ENCODE measurements at regions of chr10 and their contacts with region 1.

Region 1: GRCh38 chr10:56622335-56622973 is 261.4 kb upstream of the ZWINT start:
- DNase-seq: no peak
- ATAC-seq: peak; percentile 92
- H3K4me3 ChIP-seq: no peak overlapping the region
- H3K27ac ChIP-seq: peak overlapping the region; percentile 36; the same call in 1 of the 2 replicates
- H3K4me1 ChIP-seq: peaks cover 10% of the 10 kb centered on the region; the same call in 1 of the 2 replicates
- H3K27me3 ChIP-seq: no peaks in the 10 kb centered on the region
- CTCF ChIP-seq: no peak
- EP300 ChIP-seq: peak in 1 of 2 experiments; percentile 53; a peak in 1 of 4 replicates
- POLR2A ChIP-seq: no peak
- RAD21 ChIP-seq: no peak

Region 2: GRCh38 chr10:56481521-56482091 is 140.8 kb before region 1 on chr10:
- CTCF ChIA-PET with region 1: no interaction called
- POLR2A ChIA-PET with region 1: no interaction called
- RAD21 ChIA-PET with region 1: no interaction called
- SMC1A ChIA-PET with region 1: no interaction called
- in situ Hi-C with region 1: no loop called
- intact Hi-C with region 1: loop called (anchors 5 kb)
- DNase-seq: no peak
- ATAC-seq: peak; percentile 76
- H3K4me3 ChIP-seq: no peak overlapping the region
- H3K27ac ChIP-seq: no peak overlapping the region
- H3K4me1 ChIP-seq: no peaks in the 10 kb centered on the region
- H3K27me3 ChIP-seq: no peaks in the 10 kb centered on the region
- CTCF ChIP-seq: no peak
- EP300 ChIP-seq: no peak
- POLR2A ChIP-seq: no peak
- RAD21 ChIP-seq: no peak

Region 3: DNA sequence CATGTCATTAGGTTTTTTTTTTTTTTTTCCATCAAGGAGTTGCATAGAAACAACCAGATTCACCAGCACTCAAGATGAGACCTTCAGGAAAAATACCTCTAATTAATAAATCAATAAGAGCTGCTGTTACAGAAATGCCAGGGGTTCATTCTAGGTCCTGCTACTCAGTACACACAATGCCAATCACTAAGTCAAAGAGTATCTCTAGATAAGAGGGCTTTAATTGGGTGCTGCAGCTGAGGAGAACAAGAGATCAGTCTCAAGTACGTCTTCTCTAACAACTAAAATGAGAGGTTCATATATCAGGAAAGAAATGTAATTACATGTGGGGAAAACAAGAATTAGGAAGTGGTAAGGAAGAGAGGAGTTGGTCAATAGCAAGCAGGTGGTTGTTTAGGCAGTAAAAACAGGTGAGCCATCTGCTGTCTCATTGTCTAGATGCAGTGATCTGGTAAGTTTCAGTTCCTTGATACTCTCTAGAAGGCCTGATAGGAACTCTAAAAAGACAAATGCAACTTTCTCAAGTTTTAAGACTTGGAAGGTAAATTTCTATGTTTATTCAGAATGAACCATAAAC is 11.5 kb after region 1 on chr10:
- CTCF ChIA-PET with region 1: interaction called, 5 read pairs
- POLR2A ChIA-PET with region 1: no interaction called
- RAD21 ChIA-PET with region 1: interaction called, 3 read pairs
- SMC1A ChIA-PET with region 1: interaction called, 10 read pairs
- in situ Hi-C with region 1: no loop called
- intact Hi-C with region 1: no loop called
- DNase-seq: peak; percentile 59
- ATAC-seq: peak; percentile 99
- H3K4me3 ChIP-seq: 0 out of 2 replicates have a peak overlapping the region, but pooled peaks have one; percentile 6
- H3K27ac ChIP-seq: peak overlapping the region; percentile 73
- H3K4me1 ChIP-seq: peaks cover 19% of the 10 kb centered on the region
- H3K27me3 ChIP-seq: no peaks in the 10 kb centered on the region
- CTCF ChIP-seq: no peak
- EP300 ChIP-seq: peak; percentile 79 to 96
- POLR2A ChIP-seq: no peak
- RAD21 ChIP-seq: no peak

Region 4: GRCh38 chr10:56943221-56943755 is 320.8 kb after region 1 on chr10:
- CTCF ChIA-PET with region 1: no interaction called
- POLR2A ChIA-PET with region 1: no interaction called
- RAD21 ChIA-PET with region 1: no interaction called
- SMC1A ChIA-PET with region 1: no interaction called
- in situ Hi-C with region 1: no loop called
- intact Hi-C with region 1: no loop called
- DNase-seq: no peak
- ATAC-seq: no peak
- H3K4me3 ChIP-seq: no peak overlapping the region
- H3K27ac ChIP-seq: no peak overlapping the region
- H3K4me1 ChIP-seq: no peaks in the 10 kb centered on the region
- H3K27me3 ChIP-seq: no peaks in the 10 kb centered on the region
- CTCF ChIP-seq: no peak
- EP300 ChIP-seq: no peak
- POLR2A ChIP-seq: no peak
- RAD21 ChIP-seq: no peak